ENCODE measurements at regions of chr1 and their contacts with region 1.

Region 1: GRCh38 chr1:119647734-119648619 is at the start of gene ZNF697:
- DNase-seq: peak; percentile 71 to 83 (median 72)
- H3K4me3 ChIP-seq: peak within 1 kb of the TSS; percentile 64 to 88 (median 79)
- H3K27ac ChIP-seq: peak within 1 kb of the TSS in 1 of 2 experiments; percentile 29
- H3K4me1 ChIP-seq: peaks cover 6 to 28% (median 20%) of the 10 kb centered on the region in 4 experiments
- H3K27me3 ChIP-seq: peaks cover 6 to 22% (median 10%) of the 10 kb centered on the region in 5 experiments

Region 2: GRCh38 chr1:119631433-119632102 is 16.4 kb before region 1 on chr1:
- CTCF ChIA-PET with region 1: interaction called, 19 read pairs
- POLR2A ChIA-PET with region 1: interaction called, 4 read pairs
- DNase-seq: peak; percentile 59 to 79 (median 70)
- H3K4me3 ChIP-seq: peak overlapping the region in 5 of 7 experiments; percentile 15 to 66 (median 50)
- H3K27ac ChIP-seq: no peak overlapping the region
- H3K4me1 ChIP-seq: peaks cover 0 to 23% (median 21%) of the 10 kb centered on the region in 4 experiments
- H3K27me3 ChIP-seq: no peaks in the 10 kb centered on the region

Region 3: DNA sequence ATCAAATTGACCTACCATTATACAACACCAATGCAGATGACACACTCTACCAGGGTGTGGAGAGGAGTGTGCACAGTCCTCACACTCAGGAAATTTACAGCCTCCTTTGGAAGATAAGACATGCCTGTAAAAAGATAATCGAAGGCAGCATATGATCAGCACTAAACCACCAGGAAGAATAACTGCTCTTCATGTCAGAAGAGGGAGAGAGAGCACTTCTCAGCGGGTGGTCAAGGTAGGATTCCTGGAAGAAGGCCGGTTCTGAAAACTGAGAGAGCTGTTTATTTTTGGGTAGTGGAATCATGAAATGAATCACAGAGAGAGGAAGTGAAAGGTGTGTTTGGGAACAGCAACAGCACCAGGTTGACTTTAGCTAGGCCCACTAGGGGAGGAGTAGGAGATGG is 14.1 kb after region 1 on chr1:
- CTCF ChIA-PET with region 1: interaction called, 97 read pairs
- POLR2A ChIA-PET with region 1: no interaction called
- DNase-seq: no peak
- H3K4me3 ChIP-seq: no peak overlapping the region
- H3K27ac ChIP-seq: no peak overlapping the region
- H3K4me1 ChIP-seq: no peaks in the 10 kb centered on the region
- H3K27me3 ChIP-seq: no peaks in the 10 kb centered on the region

Region 4: GRCh38 chr1:119675349-119676345 is 27.7 kb after region 1 on chr1:
- CTCF ChIA-PET with region 1: interaction called, 10 read pairs
- POLR2A ChIA-PET with region 1: no interaction called
- DNase-seq: peak; percentile 81 to 91 (median 86)
- H3K4me3 ChIP-seq: peak overlapping the region; percentile 8 to 86 (median 65)
- H3K27ac ChIP-seq: peak overlapping the region in 1 of 2 experiments; percentile 7
- H3K4me1 ChIP-seq: peaks cover 0 to 15% (median 4%) of the 10 kb centered on the region in 4 experiments
- H3K27me3 ChIP-seq: no peaks in the 10 kb centered on the region

Region 5: GRCh38 chr1:119816407-119816806 is 168.4 kb after region 1 on chr1:
- CTCF ChIA-PET with region 1: no interaction called
- POLR2A ChIA-PET with region 1: no interaction called
- DNase-seq: no peak
- H3K4me3 ChIP-seq: no peak overlapping the region
- H3K27ac ChIP-seq: no peak overlapping the region
- H3K4me1 ChIP-seq: no peaks in the 10 kb centered on the region
- H3K27me3 ChIP-seq: peaks cover 0 to 2% (median 0%) of the 10 kb centered on the region in 5 experiments